Panc1 (cell line): ENCODE measurements at regions of chr7 and their contacts with region 1.

Region 1: GRCh38 chr7:26038201-26038990 is 113.6 kb upstream of the NFE2L3 start:
- DNase-seq: no peak
- ATAC-seq: peak; percentile 38; the same call in 1 of the 2 replicates
- H3K4me3 ChIP-seq: no peak overlapping the region
- H3K27ac ChIP-seq: no peak overlapping the region
- H3K4me1 ChIP-seq: no peaks in the 10 kb centered on the region
- H3K27me3 ChIP-seq: peaks cover 26% of the 10 kb centered on the region
- CTCF ChIP-seq: no peak

Region 2: DNA sequence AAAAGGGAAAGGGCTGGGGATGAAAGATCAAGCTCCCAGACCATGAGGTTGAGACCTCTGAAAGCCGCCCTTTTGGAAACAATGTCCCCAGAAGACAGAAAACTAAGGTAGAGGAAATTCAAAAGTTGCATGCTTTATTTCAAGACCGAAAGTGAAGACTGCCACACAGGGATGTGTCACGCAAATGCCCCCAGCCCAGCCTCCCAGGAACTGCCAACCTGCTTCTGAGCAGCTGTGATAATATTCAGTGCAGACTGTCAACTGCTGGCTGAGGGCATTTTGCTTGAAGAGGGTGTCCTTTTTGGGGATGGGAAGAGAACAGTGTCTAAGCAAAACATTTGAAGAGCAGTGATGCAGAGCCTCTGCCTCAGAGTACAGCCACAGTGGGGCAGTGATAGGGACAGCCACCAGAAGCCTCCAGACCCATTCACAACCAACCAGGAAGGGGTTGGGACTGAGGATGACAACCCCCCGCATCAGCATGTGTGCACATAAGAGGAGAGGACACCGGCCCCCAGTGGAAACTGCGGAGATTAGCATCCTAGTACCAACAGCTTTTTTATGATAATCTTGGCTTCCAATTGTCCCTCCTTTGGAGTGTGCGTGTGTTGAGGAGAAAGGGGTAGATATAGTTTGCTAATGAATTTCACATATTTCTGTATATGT is 78.9 kb after region 1 on chr7:
- CTCF ChIA-PET with region 1: no interaction called
- POLR2A ChIA-PET with region 1: no interaction called
- in situ Hi-C with region 1: no loop called
- intact Hi-C with region 1: no loop called
- DNase-seq: no peak
- ATAC-seq: 0 out of 2 replicates have a peak, but pooled peaks have one; percentile 19
- H3K4me3 ChIP-seq: no peak overlapping the region
- H3K27ac ChIP-seq: no peak overlapping the region
- H3K4me1 ChIP-seq: no peaks in the 10 kb centered on the region
- H3K27me3 ChIP-seq: peaks cover 2% of the 10 kb centered on the region; the same call in 1 of the 2 replicates
- CTCF ChIP-seq: no peak

Region 3: DNA sequence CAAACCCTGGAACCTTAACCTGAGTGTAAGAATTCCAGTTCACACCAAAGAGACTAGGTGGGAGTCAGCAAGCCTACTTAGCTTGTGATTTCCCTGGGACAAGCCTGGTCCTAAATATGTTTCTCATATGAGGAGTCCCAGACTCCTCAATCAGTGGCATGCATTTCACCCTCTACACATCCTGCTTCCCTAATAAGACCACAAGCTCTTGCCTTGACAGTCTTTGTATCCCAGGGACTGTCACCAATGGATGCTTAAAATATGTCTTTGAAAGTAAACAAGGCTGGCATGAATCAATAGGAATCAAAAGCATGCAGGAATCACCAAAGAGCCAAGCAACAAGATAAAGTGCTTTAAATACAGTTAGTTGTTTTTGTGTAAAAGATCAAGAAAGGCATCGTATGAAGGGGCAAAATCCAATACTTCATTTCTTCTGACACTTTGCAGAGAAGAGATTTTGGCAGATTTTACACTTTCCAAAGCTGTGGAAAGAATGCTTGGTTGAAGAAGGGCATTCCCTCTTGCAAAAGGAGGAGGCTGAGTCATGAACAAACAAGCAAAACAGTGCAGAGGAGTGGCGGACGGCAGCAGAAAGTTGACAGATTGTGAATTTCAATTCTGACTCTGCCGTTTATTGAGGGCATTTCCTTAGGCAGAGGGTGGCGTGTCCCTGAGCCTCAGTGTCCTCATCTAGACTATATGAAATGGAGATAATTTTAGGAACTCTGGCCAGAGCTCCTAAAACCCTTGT is 105.1 kb after region 1 on chr7:
- CTCF ChIA-PET with region 1: no interaction called
- POLR2A ChIA-PET with region 1: interaction called, 14 read pairs
- in situ Hi-C with region 1: no loop called
- intact Hi-C with region 1: no loop called
- DNase-seq: no peak
- ATAC-seq: peak; percentile 85
- H3K4me3 ChIP-seq: no peak overlapping the region
- H3K27ac ChIP-seq: 0 out of 2 replicates have a peak overlapping the region, but pooled peaks have one; percentile 4
- H3K4me1 ChIP-seq: peaks cover 9% of the 10 kb centered on the region
- H3K27me3 ChIP-seq: no peaks in the 10 kb centered on the region
- CTCF ChIP-seq: no peak

Region 4: GRCh38 chr7:26224359-26224758 is 186.0 kb after region 1 on chr7:
- CTCF ChIA-PET with region 1: no interaction called
- POLR2A ChIA-PET with region 1: no interaction called
- in situ Hi-C with region 1: no loop called
- intact Hi-C with region 1: no loop called
- DNase-seq: no peak
- ATAC-seq: no peak
- H3K4me3 ChIP-seq: no peak overlapping the region
- H3K27ac ChIP-seq: no peak overlapping the region
- H3K4me1 ChIP-seq: no peaks in the 10 kb centered on the region
- H3K27me3 ChIP-seq: no peaks in the 10 kb centered on the region
- CTCF ChIP-seq: no peak

Region 5: DNA sequence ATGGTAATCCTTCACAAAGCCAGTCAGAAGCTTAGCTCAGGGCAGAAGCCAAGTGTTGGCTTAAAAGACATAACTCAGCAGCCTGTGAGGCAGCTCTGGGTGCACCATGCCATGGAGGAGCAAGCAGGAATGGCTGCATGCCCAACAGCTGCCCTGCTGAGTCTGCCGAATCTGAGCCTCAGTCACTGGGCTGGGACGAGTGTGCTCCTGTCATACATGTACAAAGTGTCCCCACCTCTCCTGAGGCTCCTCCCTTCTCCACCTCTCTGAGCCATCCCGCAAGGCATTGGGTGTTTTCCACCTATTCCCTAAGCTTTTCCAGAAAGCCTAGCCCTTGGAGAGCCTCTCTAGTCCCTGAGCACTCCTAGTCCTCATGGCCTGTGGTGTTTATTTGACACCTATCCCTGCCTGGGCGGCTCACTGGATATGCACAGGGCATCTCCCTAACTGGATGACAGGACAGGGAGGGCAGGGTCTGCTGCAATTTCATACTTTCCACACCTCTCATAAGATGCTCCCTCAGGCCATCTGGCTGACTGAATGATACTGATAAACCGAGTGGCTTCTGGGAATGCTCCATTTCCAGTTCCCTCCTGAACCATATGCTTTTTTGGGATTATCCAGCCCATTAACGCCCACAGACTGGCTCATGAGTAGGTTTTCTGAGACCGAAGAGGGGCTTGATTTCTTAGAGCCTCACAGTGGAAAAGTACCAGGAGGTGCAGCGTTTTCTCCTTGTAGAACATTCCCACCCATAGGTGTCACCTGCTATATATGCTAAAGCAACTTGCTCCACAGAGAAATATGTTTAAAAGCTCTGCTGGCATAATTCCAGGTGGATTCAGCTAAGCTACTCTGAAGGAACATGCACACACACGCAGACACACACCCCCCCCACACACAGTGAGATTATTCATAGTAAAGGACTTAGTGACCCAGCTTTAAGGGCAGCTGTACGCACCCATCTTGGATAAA is 452.5 kb after region 1 on chr7:
- CTCF ChIA-PET with region 1: no interaction called
- POLR2A ChIA-PET with region 1: no interaction called
- in situ Hi-C with region 1: no loop called
- intact Hi-C with region 1: no loop called
- DNase-seq: no peak
- ATAC-seq: peak; percentile 37; the same call in 1 of the 2 replicates
- H3K4me3 ChIP-seq: no peak overlapping the region
- H3K27ac ChIP-seq: no peak overlapping the region
- H3K4me1 ChIP-seq: no peaks in the 10 kb centered on the region
- H3K27me3 ChIP-seq: no peaks in the 10 kb centered on the region; the same call in 1 of the 2 replicates
- CTCF ChIP-seq: no peak

Region 6: DNA sequence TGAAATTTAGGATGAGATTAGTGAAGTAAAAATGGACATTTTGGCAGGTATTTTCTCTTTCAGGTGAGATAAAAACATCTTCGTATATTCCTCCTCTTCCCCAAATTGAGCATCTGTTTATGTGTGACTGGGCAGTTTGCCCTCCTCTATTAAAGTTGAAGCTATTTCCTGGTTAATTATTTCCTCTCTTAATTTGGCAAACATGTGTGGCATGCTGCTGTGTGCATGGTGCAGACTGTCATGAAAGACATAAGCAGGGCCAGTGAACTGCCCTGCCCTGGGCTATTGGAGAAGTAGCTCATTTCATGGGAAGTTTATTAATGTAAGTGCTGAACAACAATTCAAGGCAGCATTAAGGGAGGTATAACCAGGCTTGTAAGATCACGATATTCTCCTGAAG is 1256.8 kb after region 1 on chr7:
- CTCF ChIA-PET with region 1: no interaction called
- POLR2A ChIA-PET with region 1: no interaction called
- in situ Hi-C with region 1: no loop called
- intact Hi-C with region 1: no loop called
- DNase-seq: no peak
- ATAC-seq: no peak
- H3K4me3 ChIP-seq: no peak overlapping the region
- H3K27ac ChIP-seq: no peak overlapping the region
- H3K4me1 ChIP-seq: no peaks in the 10 kb centered on the region
- H3K27me3 ChIP-seq: no peaks in the 10 kb centered on the region
- CTCF ChIP-seq: no peak